PC-9 (cell line): ENCODE measurements at regions of chr10 and their contacts with region 1.

Region 1: GRCh38 chr10:90407161-90407571 is 450.7 kb downstream of the HTR7 start:
- DNase-seq: peak; percentile 21 to 76
- H3K4me3 ChIP-seq: no peak overlapping the region
- H3K27ac ChIP-seq: no peak overlapping the region
- H3K4me1 ChIP-seq: peaks cover 16% of the 10 kb centered on the region
- H3K27me3 ChIP-seq: no peaks in the 10 kb centered on the region
- CTCF ChIP-seq: no peak

Region 2: GRCh38 chr10:90319188-90319914 is 87.8 kb before region 1 on chr10:
- CTCF ChIA-PET with region 1: no interaction called
- POLR2A ChIA-PET with region 1: no interaction called
- intact Hi-C with region 1: loop called (anchors 10 kb)
- DNase-seq: peak; percentile 46 to 84
- H3K4me3 ChIP-seq: no peak overlapping the region
- H3K27ac ChIP-seq: no peak overlapping the region
- H3K4me1 ChIP-seq: peaks cover 16% of the 10 kb centered on the region; the same call in 1 of the 2 replicates
- H3K27me3 ChIP-seq: no peaks in the 10 kb centered on the region
- CTCF ChIP-seq: no peak

Region 3: DNA sequence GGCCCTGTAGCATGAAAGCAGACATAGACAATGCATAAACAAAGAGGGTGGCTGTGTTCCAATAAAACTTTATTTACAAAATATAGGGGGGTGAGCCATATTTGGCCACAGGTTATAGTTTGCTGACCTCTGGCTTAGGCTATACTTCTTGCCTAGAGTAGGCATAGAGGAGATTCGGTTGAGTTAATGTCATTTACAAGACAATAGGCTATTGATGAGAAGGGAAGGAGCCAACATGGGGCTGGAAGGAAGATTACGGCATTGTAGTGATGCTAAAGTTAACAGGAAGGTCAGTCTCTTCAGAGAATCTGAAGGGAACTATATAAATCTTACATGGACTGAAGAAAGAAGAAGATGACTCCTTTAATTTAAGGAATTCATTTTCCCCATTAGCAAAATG is 12.9 kb before region 1 on chr10:
- CTCF ChIA-PET with region 1: no interaction called
- POLR2A ChIA-PET with region 1: no interaction called
- intact Hi-C with region 1: no loop called
- DNase-seq: no peak
- H3K4me3 ChIP-seq: no peak overlapping the region
- H3K27ac ChIP-seq: no peak overlapping the region
- H3K4me1 ChIP-seq: no peaks in the 10 kb centered on the region
- H3K27me3 ChIP-seq: no peaks in the 10 kb centered on the region
- CTCF ChIP-seq: no peak

Region 4: GRCh38 chr10:90484518-90484917 is 77.4 kb after region 1 on chr10:
- CTCF ChIA-PET with region 1: no interaction called
- POLR2A ChIA-PET with region 1: no interaction called
- intact Hi-C with region 1: loop called (anchors 5 kb)
- DNase-seq: peak in 1 of 2 experiments; percentile 66
- H3K4me3 ChIP-seq: no peak overlapping the region
- H3K27ac ChIP-seq: no peak overlapping the region
- H3K4me1 ChIP-seq: no peaks in the 10 kb centered on the region
- H3K27me3 ChIP-seq: no peaks in the 10 kb centered on the region
- CTCF ChIP-seq: no peak

Region 5: GRCh38 chr10:90496591-90496990 is 89.4 kb after region 1 on chr10:
- CTCF ChIA-PET with region 1: no interaction called
- POLR2A ChIA-PET with region 1: no interaction called
- intact Hi-C with region 1: loop called (anchors 5 kb)
- DNase-seq: no peak
- H3K4me3 ChIP-seq: no peak overlapping the region
- H3K27ac ChIP-seq: no peak overlapping the region
- H3K4me1 ChIP-seq: no peaks in the 10 kb centered on the region; the same call in 1 of the 2 replicates
- H3K27me3 ChIP-seq: no peaks in the 10 kb centered on the region
- CTCF ChIP-seq: no peak

Region 6: GRCh38 chr10:90592638-90593302 is 185.6 kb after region 1 on chr10:
- CTCF ChIA-PET with region 1: no interaction called
- POLR2A ChIA-PET with region 1: no interaction called
- intact Hi-C with region 1: loop called (anchors 5 kb)
- DNase-seq: peak in 1 of 2 experiments; percentile 63
- H3K4me3 ChIP-seq: no peak overlapping the region
- H3K27ac ChIP-seq: no peak overlapping the region
- H3K4me1 ChIP-seq: no peaks in the 10 kb centered on the region
- H3K27me3 ChIP-seq: no peaks in the 10 kb centered on the region
- CTCF ChIP-seq: peak; percentile 62